PC-3 (cell line): ENCODE measurements at regions of chr7 and their contacts with region 1.

Region 1: DNA sequence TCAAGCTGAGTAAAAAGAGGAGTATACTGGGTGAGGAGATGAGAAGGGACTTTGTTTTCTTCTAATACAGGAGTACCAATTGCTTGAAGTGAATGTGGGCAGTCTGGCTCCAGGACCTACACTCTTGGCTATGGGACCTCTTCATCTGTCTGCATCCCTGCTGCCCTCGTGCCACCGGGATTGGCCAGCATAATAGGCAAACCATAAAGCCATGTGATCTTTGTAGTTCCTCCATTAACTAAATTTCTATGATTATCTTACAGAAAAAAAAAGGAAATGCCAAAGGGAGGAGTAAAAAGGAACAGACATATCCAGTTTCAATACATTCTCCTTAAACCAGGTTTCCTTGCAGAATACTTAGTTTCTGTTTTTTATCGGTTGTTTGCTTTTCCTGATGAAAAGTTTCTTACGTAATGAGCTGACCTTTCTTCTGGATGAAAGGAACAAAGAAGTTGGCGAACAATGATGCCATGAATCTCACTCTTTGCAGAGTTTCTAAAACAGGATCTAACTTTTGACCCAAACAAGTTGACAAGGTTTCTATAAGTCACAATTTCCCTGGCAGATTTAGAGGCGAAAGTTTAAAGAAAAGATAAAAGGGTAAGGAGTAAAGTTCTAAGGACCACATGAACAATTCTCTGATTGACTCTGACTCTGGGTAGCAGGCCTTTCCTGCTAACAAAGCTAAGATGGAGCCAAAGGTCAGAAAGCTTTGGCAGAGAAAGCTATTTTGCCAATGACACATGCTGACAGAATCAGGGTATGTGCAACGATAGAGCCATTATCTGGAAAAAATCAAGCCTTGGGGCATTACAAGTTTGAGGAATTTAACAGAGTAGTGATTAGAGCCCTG is 54.1 kb downstream of the LAMB1 start:
- DNase-seq: peak; percentile 97
- ATAC-seq: peak; percentile 72
- H3K4me3 ChIP-seq: peak overlapping the region; percentile 17; the same call in 1 of the 2 replicates
- H3K27ac ChIP-seq: peak overlapping the region; percentile 95
- H3K4me1 ChIP-seq: peaks cover 61% of the 10 kb centered on the region
- H3K27me3 ChIP-seq: no peaks in the 10 kb centered on the region
- CTCF ChIP-seq: no peak

Region 2: DNA sequence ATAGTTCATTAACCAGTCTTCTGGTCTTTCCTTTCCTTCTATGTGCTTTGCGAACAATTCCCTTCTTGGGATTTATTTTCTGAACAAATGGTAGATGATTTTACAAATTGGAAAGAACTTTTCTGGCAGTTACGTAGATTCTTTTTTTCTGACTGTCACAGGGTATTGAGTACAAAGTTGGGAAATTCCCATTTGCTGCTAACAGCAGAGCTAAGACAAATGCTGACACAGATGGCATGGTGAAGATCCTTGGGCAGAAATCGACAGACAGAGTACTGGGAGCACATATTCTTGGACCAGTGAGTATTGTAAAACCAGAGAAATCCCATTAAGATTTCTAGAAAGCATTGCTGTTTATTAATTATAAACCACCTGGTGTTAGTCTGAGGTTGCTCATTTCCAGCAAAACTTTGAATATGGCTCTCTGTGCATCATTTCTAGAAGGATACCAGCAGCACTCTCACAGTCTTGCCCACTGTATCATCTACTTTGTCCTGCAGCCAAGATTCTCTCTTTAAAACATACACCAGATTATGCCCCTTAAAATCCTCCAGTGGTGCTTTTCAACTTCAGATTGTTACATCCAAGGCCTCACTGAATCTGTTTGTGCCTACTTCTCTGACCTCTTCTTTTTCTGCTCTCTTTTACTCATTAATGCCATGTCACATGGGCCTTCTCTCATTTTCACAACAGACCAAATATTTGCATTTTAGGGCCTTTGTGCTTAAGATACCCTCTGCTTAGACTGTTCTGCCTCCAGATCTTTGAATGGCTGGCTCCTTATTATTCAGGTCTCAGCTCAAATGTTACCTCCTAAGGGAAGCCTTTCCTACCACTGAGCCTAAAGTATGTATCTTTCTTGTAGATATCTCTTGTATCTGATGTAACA is 30.9 kb before region 1 on chr7:
- CTCF ChIA-PET with region 1: no interaction called
- POLR2A ChIA-PET with region 1: no interaction called
- intact Hi-C with region 1: no loop called
- DNase-seq: no peak
- ATAC-seq: no peak
- H3K4me3 ChIP-seq: no peak overlapping the region
- H3K27ac ChIP-seq: no peak overlapping the region
- H3K4me1 ChIP-seq: peaks cover 13% of the 10 kb centered on the region
- H3K27me3 ChIP-seq: no peaks in the 10 kb centered on the region
- CTCF ChIP-seq: no peak

Region 3: GRCh38 chr7:107966711-107967110 is 17.8 kb after region 1 on chr7:
- CTCF ChIA-PET with region 1: interaction called, 3 read pairs
- POLR2A ChIA-PET with region 1: no interaction called
- intact Hi-C with region 1: loop called (anchors 1 kb)
- DNase-seq: peak; percentile 89
- ATAC-seq: peak; percentile 87
- H3K4me3 ChIP-seq: no peak overlapping the region
- H3K27ac ChIP-seq: peak overlapping the region; percentile 61
- H3K4me1 ChIP-seq: peaks cover 26% of the 10 kb centered on the region
- H3K27me3 ChIP-seq: no peaks in the 10 kb centered on the region
- CTCF ChIP-seq: no peak

Region 4: DNA sequence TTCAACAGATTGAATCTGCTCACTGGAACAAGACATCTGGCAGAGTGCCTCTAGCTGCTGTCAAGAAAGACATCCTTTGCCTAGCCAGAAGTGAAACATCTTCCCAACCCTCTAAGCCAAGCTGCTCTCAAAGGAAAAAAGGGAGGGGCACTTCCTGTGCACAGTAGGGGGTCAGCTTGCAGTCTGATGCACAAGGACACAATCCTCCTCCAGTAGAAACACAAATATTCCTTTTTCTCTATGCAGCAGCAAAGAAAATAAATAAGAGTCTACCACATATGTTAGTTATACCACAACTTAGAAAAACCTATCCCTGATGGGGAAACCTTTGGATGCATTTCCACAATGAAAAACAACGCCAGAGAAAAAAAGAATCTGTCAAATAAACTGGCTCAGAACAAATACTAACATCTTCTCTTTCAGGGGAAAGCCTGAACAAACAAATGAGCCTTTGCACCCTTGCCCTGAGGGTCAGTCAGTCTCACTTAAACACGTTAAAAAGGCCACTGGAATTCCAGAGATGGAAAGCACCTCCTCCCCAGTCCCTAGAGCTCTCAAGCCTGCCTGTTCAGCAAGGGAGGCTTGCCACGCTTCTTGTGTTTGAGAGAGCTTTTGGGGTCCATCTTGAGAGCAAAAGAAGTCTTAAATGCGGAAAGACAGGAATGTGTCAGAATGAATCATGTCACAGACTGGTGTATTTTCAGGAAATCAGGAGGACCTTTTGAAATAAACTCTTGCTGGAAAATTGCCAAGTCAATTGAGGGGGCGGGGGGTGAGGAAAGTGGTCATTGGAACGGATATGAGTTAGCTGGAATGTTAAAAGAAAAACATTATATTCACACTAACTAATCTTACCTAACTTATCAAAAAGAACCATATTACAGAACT is 46.6 kb after region 1 on chr7:
- CTCF ChIA-PET with region 1: no interaction called
- POLR2A ChIA-PET with region 1: no interaction called
- intact Hi-C with region 1: loop called (anchors 2 kb)
- DNase-seq: peak; percentile 91
- ATAC-seq: peak; percentile 68
- H3K4me3 ChIP-seq: peak overlapping the region; percentile 22; the same call in 1 of the 2 replicates
- H3K27ac ChIP-seq: peak overlapping the region; percentile 88
- H3K4me1 ChIP-seq: peaks cover 65% of the 10 kb centered on the region
- H3K27me3 ChIP-seq: no peaks in the 10 kb centered on the region
- CTCF ChIP-seq: no peak